CD14-positive monocyte (primary cell): ENCODE measurements at regions of chr6 and their contacts with region 1.

Region 1: DNA sequence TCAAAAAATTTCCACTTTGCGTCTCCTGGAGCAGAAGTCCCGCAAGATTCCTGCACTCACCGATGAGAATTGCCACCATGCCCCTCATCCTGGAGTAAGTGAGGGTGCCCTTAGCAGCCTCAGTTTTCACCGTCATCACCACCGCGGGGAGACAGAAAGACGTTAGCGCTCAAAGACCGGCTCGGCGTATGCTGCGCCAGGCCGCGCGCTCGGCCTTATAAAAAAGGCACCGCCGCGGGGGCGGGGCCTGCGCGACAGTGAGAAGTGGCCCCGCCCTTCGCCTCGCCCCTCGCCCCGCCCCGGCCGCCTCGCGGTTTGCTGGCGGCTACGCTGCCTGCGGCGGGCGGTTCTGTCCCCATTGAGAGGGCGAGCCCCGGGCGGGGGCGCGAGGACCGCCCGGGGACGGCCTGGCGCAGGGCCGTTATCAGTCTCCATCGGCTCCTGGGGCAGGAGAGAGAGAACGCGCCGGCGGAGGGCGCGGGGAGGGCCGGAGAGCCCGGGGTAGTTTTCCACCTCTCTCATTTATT is 122.3 kb upstream of the SLC2A12 start:
- DNase-seq: peak; percentile 89 to 92 (median 91)
- H3K4me3 ChIP-seq: peak overlapping the region; percentile 83 to 97 (median 95)
- H3K4me3 Mint-ChIP-seq: peak overlapping the region; percentile 100
- H3K27ac ChIP-seq: peak overlapping the region; percentile 97 to 99
- H3K27ac Mint-ChIP-seq: peak overlapping the region; percentile 97 to 100 (median 99)
- H3K4me1 ChIP-seq: peaks cover 58 to 71% of the 10 kb centered on the region in 2 donors
- H3K4me1 Mint-ChIP-seq: peaks cover 60% of the 10 kb centered on the region
- H3K27me3 ChIP-seq: no peaks in the 10 kb centered on the region
- H3K27me3 Mint-ChIP-seq: peaks cover 2 to 4% (median 2%) of the 10 kb centered on the region in 3 donors
- CTCF ChIP-seq: no peak

Region 2: GRCh38 chr6:134230087-134230700 is 55.5 kb after region 1 on chr6:
- intact Hi-C with region 1: loop called (anchors 2 to 5 kb)
- DNase-seq: peak; percentile 89 to 98 (median 94)
- H3K4me3 ChIP-seq: peak overlapping the region; percentile 7 to 62 (median 33)
- H3K4me3 Mint-ChIP-seq: peak overlapping the region; percentile 64 to 78
- H3K27ac ChIP-seq: peak overlapping the region; percentile 87 to 92
- H3K27ac Mint-ChIP-seq: peak overlapping the region; percentile 94 to 99 (median 97)
- H3K4me1 ChIP-seq: peaks cover 50 to 67% of the 10 kb centered on the region in 2 donors
- H3K4me1 Mint-ChIP-seq: peaks cover 46% of the 10 kb centered on the region
- H3K27me3 ChIP-seq: no peaks in the 10 kb centered on the region
- H3K27me3 Mint-ChIP-seq: no peaks in the 10 kb centered on the region
- CTCF ChIP-seq: no peak

Region 3: DNA sequence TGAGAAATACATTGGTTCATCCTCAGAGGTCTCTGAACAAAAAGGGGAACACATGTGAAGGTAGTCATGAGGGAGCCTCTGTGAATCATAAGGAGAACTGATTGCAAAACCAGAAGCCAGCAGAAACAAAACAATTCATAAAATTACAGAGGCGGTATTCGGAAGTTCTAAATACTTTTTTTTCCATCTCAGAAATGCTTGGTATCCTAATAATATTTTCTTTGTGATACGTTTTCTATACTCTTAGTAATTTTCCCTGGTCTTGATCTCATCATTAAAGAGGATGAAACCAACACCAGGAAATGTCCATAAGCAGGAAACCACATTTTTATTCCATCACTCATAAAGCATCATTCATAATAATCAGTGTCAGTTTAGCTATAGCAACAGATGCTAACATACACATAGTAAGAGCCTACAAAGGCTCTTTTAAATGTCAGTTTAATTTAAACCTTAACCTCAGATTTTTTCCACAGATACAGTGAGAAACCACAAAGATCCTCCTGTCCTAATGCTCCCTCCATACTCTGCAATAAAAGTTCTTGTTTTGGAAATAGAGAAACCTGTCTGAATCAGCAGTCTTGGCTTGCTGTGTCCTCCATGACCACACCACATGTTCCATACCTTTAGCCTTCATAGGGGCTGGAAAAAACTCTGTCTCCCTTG is 113.9 kb after region 1 on chr6:
- intact Hi-C with region 1: loop called (anchors 2 to 5 kb)
- DNase-seq: peak; percentile 91 to 96 (median 95)
- H3K4me3 ChIP-seq: peak overlapping the region in 1 of 3 experiments; percentile 11
- H3K4me3 Mint-ChIP-seq: peak overlapping the region in 1 of 2 donors; percentile 51
- H3K27ac ChIP-seq: peak overlapping the region; percentile 67 to 95
- H3K27ac Mint-ChIP-seq: peak overlapping the region; percentile 95 to 99 (median 97)
- H3K4me1 ChIP-seq: peaks cover 20 to 23% of the 10 kb centered on the region in 2 donors
- H3K4me1 Mint-ChIP-seq: peaks cover 24% of the 10 kb centered on the region
- H3K27me3 ChIP-seq: no peaks in the 10 kb centered on the region
- H3K27me3 Mint-ChIP-seq: no peaks in the 10 kb centered on the region
- CTCF ChIP-seq: no peak

Region 4: DNA sequence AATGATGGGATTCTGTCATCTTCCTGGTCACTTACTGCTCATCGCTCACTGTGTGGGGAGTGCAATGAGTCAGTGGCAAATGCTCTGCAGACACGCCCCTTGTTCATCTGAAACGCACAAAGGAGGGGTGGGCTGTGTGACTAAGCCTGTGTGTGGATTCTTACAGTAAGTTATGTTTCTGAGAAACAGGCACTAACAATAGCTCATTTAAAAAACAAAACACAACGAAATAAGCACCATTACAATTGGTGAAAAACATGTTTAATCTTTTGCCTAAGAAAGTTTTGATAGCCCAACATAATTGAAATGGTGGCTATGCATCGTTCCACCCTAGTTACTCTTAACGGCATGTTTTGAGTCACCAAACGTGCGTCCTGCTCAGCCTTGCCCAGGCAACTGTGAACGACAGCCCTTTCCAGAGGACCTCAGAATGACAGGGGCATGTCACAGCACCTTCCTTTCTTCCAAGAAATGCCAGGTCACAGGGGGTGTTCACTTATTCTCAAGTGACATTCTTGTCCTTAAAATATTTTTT is 261.6 kb after region 1 on chr6:
- intact Hi-C with region 1: loop called (anchors 2 kb)
- DNase-seq: peak; percentile 92 to 95 (median 93)
- H3K4me3 ChIP-seq: peak overlapping the region in 1 of 3 experiments; percentile 47
- H3K4me3 Mint-ChIP-seq: no peak overlapping the region
- H3K27ac ChIP-seq: peak overlapping the region; percentile 86 to 96
- H3K27ac Mint-ChIP-seq: peak overlapping the region; percentile 97 to 99 (median 98)
- H3K4me1 ChIP-seq: peaks cover 29 to 42% of the 10 kb centered on the region in 2 donors
- H3K4me1 Mint-ChIP-seq: peaks cover 35% of the 10 kb centered on the region
- H3K27me3 ChIP-seq: no peaks in the 10 kb centered on the region
- H3K27me3 Mint-ChIP-seq: no peaks in the 10 kb centered on the region
- CTCF ChIP-seq: no peak

Region 5: DNA sequence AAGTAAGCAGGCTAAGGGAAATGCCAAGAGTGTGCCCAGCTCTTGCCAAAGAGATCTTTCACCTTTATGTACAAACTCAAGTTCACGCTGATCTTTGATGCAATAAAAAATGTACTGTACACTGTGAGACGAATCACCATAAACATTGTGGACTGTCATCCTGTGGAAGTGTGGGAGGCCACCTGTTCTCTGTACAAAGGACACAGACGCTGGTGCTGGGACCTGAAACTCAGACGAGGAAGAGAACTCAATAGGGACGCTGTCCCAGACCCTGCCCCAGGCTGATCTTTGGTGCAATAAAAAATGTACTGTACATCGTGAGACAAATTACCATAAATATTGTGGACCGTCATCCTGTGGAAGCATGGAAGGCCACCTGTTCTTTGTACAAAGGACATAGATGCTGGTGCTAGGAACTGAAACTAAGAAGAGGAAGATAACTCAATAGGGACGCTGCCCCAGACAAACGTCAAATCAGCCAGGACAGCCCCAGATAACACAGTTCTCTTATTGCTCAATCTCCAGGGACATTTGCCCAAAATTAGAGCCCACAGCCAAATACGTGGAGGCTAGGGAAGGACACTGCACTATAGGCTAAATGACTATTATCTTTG is 455.9 kb after region 1 on chr6:
- intact Hi-C with region 1: loop called in 1 of 2 experiments (anchors 2 kb)
- DNase-seq: peak; percentile 64 to 81 (median 81)
- H3K4me3 ChIP-seq: no peak overlapping the region
- H3K4me3 Mint-ChIP-seq: peak overlapping the region; percentile 2 to 35
- H3K27ac ChIP-seq: no peak overlapping the region
- H3K27ac Mint-ChIP-seq: peak overlapping the region; percentile 62 to 94 (median 77)
- H3K4me1 ChIP-seq: peaks cover 26 to 44% of the 10 kb centered on the region in 2 donors
- H3K4me1 Mint-ChIP-seq: peaks cover 44% of the 10 kb centered on the region
- H3K27me3 ChIP-seq: no peaks in the 10 kb centered on the region
- H3K27me3 Mint-ChIP-seq: peaks cover 0 to 2% (median 0%) of the 10 kb centered on the region in 3 donors
- CTCF ChIP-seq: no peak

Region 6: GRCh38 chr6:134714679-134715421 is 540.1 kb after region 1 on chr6:
- intact Hi-C with region 1: loop called in 1 of 2 experiments (anchors 10 kb)
- DNase-seq: peak in 2 of 3 donors; percentile 49 to 53
- H3K4me3 ChIP-seq: no peak overlapping the region
- H3K4me3 Mint-ChIP-seq: no peak overlapping the region
- H3K27ac ChIP-seq: no peak overlapping the region
- H3K27ac Mint-ChIP-seq: peak overlapping the region in 6 of 7 donors; percentile 8 to 78 (median 54)
- H3K4me1 ChIP-seq: peaks cover 32 to 34% of the 10 kb centered on the region in 2 donors
- H3K4me1 Mint-ChIP-seq: peaks cover 33% of the 10 kb centered on the region
- H3K27me3 ChIP-seq: no peaks in the 10 kb centered on the region
- H3K27me3 Mint-ChIP-seq: peaks cover 0 to 2% (median 2%) of the 10 kb centered on the region in 3 donors
- CTCF ChIP-seq: no peak